ENCODE measurements at regions of chr12 and their contacts with region 1.

Region 1: DNA sequence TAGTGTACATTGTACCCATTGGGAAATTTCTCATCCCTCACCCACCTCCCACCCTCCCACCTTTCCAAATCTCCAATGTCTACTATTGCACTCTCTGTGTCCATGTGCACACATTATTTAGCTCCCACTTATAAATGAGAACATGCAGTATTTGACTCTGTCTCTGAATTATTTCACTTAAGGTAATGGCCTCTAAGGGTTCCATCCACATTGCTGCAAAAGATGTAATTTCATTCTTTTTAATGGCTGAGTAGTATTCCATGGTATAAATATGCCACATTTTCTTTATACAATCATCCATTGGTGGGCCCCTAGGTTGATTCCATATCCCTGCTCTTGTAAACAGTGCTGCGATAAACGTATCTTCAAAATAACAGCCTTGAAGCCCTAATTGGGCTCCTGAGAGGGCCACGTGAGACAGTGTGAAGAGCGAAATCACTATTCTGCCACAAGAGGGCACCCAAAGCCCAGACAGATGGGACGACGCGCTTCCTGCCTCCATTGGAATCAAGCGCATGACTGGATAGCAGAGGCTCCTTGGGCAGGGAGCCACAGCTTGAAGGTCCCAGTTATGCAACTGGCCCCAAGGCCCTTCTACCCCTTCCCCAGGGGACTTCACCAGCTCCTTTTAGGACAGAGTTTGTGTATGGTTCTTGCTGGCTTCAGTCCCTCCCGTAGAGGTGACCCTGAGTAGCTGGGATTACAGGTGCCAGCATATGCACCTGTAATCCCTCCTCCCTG is 21.3 kb upstream of the CD27 start:
- DNase-seq: peak; percentile 71
- H3K4me3 Mint-ChIP-seq: no peak overlapping the region
- H3K27ac Mint-ChIP-seq: peak overlapping the region; percentile 46
- H3K4me1 Mint-ChIP-seq: peaks cover 40% of the 10 kb centered on the region
- H3K27me3 Mint-ChIP-seq: peaks cover 2% of the 10 kb centered on the region

Region 2: DNA sequence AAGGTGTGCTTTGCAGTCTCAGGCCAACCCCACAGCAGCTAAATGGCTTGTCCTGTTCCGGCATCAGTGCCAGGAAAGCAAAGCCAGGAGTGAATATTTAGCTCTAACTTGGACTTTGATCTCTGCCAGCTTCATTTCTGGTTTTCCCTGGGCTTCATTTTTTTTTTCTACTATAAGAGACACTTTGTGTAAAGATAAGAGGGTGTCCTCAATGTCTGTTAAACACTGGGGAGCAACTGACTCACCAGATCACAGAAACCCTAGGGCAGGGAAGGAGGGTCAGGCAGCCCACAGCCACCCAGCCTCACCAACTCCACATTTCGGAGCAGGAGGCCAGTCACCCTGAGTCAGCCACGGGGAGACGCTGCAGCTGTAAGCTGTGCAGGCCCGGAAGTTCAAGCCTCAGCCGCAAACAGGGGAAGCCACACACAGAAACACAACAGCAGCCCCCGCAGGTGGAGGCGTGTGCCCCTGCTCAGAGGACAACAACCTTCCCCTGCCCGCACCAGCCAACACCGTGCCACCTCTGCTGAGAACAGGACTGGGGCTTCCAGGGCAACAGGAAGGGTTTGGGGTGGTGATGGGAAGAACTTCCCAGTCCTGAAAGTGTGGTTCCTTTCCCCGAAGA is 87.9 kb before region 1 on chr12:
- intact Hi-C with region 1: loop called (anchors 5 kb)
- DNase-seq: peak; percentile 76
- H3K4me3 Mint-ChIP-seq: no peak overlapping the region
- H3K27ac Mint-ChIP-seq: no peak overlapping the region
- H3K4me1 Mint-ChIP-seq: peaks cover 32% of the 10 kb centered on the region
- H3K27me3 Mint-ChIP-seq: no peaks in the 10 kb centered on the region

Region 3: GRCh38 chr12:6451348-6452244 is 28.2 kb after region 1 on chr12 and contains the start of gene TAPBPL:
- intact Hi-C with region 1: loop called (anchors 1 kb)
- DNase-seq: peak; percentile 78
- H3K4me3 Mint-ChIP-seq: peak within 1 kb of the TSS; percentile 92
- H3K27ac Mint-ChIP-seq: peak within 1 kb of the TSS; percentile 92
- H3K4me1 Mint-ChIP-seq: peaks cover 54% of the 10 kb centered on the region
- H3K27me3 Mint-ChIP-seq: no peaks in the 10 kb centered on the region
- total RNA-seq, gene TAPBPL: 30.9 and 37.4 TPM in 2 replicates

Region 4: GRCh38 chr12:6470375-6471163 is 47.1 kb after region 1 on chr12 and contains the start of gene VAMP1:
- intact Hi-C with region 1: loop called (anchors 1 kb)
- DNase-seq: peak; percentile 98
- H3K4me3 Mint-ChIP-seq: peak within 1 kb of the TSS; percentile 88
- H3K27ac Mint-ChIP-seq: peak within 1 kb of the TSS; percentile 86
- H3K4me1 Mint-ChIP-seq: peaks cover 47% of the 10 kb centered on the region
- H3K27me3 Mint-ChIP-seq: no peaks in the 10 kb centered on the region
- total RNA-seq, gene VAMP1: 38.7 and 40.7 TPM in 2 replicates

Region 5: GRCh38 chr12:6533923-6534694 is 110.7 kb after region 1 on chr12 and contains the start of gene GAPDH:
- intact Hi-C with region 1: loop called (anchors 1 kb)
- DNase-seq: peak; percentile 87
- H3K4me3 Mint-ChIP-seq: peak within 1 kb of the TSS; percentile 94
- H3K27ac Mint-ChIP-seq: peak within 1 kb of the TSS; percentile 99
- H3K4me1 Mint-ChIP-seq: peaks cover 28% of the 10 kb centered on the region
- H3K27me3 Mint-ChIP-seq: no peaks in the 10 kb centered on the region
- total RNA-seq, gene GAPDH: 4,713 and 4,805 TPM in 2 replicates

Measured in activated T-helper 2 cell treated with anti-CD3 and anti-CD28 coated beads, Interferon-gamma antibody, Interleukin-2, Interleukin-4, amounts not matched to agents 10 μg/mL and 5 μg/mL and 100 μg/mL, durations not matched to agents 14 hours and 24 hours and 36 hours (primary cell).